CD4-positive, alpha-beta memory T cell (primary cell): ENCODE measurements at regions of chr4 and their contacts with region 1.

Region 1: GRCh38 chr4:15765910-15766697 is 12.0 kb upstream of the CD38 start:
- DNase-seq: peak; percentile 66 to 80 (median 79)
- H3K4me3 ChIP-seq: no peak overlapping the region
- H3K4me3 Mint-ChIP-seq: peak overlapping the region; percentile 10 to 83 (median 62)
- H3K27ac ChIP-seq: no peak overlapping the region
- H3K27ac Mint-ChIP-seq: peak overlapping the region; percentile 10 to 93 (median 73)
- H3K4me1 ChIP-seq: peaks cover 38% of the 10 kb centered on the region
- H3K4me1 Mint-ChIP-seq: peaks cover 25 to 43% (median 33%) of the 10 kb centered on the region in 4 donors
- H3K27me3 ChIP-seq: no peaks in the 10 kb centered on the region
- H3K27me3 Mint-ChIP-seq: no peaks in the 10 kb centered on the region

Region 2: DNA sequence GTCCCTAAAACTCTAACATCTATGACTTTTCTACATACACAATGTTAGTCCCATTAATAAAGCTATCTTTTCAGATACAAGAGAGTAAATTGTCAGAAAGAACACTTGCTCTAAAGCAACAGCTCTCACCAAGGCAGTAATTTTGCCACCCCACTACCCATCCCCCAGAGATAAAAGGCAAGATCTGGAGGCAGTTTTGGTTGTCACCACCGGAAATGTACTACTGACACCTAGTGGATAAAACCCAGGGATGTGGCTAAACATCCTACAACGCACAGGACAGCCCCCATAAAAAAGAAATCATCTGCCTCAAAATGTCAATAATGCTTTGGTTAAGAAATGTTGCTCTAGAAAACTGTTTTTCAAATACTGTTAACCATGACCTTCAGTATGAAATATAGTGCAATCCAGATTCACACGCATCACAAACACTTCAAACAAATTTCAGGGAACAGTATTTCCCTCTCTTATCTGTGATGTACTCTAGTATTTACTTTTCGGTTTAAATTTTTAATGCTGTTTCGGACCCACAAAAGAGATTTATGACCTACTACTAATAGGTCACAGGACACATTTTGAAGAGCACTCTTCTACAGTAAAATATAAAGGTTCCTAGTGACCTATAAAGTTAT is 116.1 kb before region 1 on chr4:
- CTCF ChIA-PET with region 1: no interaction called
- POLR2A ChIA-PET with region 1: interaction called, 3 read pairs
- intact Hi-C with region 1: loop called (anchors 1 kb)
- DNase-seq: peak; percentile 74 to 81 (median 75)
- H3K4me3 ChIP-seq: no peak overlapping the region
- H3K4me3 Mint-ChIP-seq: peak overlapping the region in 7 of 8 donors; percentile 1 to 75 (median 36)
- H3K27ac ChIP-seq: no peak overlapping the region
- H3K27ac Mint-ChIP-seq: peak overlapping the region in 6 of 7 donors; percentile 7 to 69 (median 38)
- H3K4me1 ChIP-seq: peaks cover 80% of the 10 kb centered on the region
- H3K4me1 Mint-ChIP-seq: peaks cover 43 to 80% (median 56%) of the 10 kb centered on the region in 4 donors
- H3K27me3 ChIP-seq: no peaks in the 10 kb centered on the region
- H3K27me3 Mint-ChIP-seq: no peaks in the 10 kb centered on the region

Region 3: DNA sequence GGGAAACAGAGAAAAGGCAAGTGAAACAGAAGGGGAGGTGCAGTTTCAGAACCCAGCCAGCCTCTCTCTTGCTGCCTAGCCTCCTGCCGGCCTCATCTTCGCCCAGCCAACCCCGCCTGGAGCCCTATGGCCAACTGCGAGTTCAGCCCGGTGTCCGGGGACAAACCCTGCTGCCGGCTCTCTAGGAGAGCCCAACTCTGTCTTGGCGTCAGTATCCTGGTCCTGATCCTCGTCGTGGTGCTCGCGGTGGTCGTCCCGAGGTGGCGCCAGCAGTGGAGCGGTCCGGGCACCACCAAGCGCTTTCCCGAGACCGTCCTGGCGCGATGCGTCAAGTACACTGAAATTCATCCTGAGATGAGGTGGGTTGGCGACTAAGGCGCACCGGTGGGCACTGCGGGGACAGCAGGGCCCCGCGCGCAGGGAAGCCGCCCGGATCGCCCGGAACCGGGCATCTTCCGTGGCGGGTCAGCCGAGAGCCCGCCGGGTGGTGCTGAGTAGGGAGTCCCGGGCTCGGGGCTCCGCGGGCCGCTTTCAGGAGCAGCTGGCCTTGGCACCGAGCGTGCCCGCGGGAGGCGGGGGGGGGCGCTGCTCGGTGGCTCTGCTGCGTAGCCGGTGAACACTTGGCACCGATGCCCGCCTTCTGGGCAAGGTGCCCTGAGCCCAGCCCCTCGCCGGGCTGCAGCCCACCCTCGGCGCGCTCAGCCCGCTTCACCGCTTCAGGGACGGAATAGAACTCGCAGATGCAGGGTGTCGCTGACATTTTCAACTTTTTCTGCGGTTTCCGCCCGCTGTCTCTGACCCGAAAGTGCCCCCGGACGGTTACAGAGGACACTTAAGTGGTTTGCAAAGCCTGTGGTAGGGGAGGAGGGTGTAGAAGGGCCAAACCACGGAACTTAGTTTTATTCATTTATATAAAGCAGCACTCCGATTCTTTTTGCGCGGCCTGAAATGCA is 12.5 kb after region 1 on chr4 and contains the start of gene CD38:
- CTCF ChIA-PET with region 1: no interaction called
- POLR2A ChIA-PET with region 1: interaction called, 15 read pairs
- intact Hi-C with region 1: loop called (anchors 1 kb)
- DNase-seq: peak in 4 of 5 donors; percentile 33 to 51 (median 45)
- H3K4me3 ChIP-seq: peak within 1 kb of the TSS; percentile 48
- H3K4me3 Mint-ChIP-seq: peak within 1 kb of the TSS; percentile 78 to 91 (median 88)
- H3K27ac ChIP-seq: no peak within 1 kb of the TSS
- H3K27ac Mint-ChIP-seq: peak within 1 kb of the TSS in 5 of 7 donors; percentile 20 to 79 (median 47)
- H3K4me1 ChIP-seq: peaks cover 34% of the 10 kb centered on the region
- H3K4me1 Mint-ChIP-seq: peaks cover 29 to 50% (median 40%) of the 10 kb centered on the region in 4 donors
- H3K27me3 ChIP-seq: no peaks in the 10 kb centered on the region
- H3K27me3 Mint-ChIP-seq: peaks cover 0 to 2% of the 10 kb centered on the region in 2 donors
- total RNA-seq, gene CD38: 1.00 to 1.7 TPM